ENCODE measurements at regions of chr5 and their contacts with region 1.

Region 1: DNA sequence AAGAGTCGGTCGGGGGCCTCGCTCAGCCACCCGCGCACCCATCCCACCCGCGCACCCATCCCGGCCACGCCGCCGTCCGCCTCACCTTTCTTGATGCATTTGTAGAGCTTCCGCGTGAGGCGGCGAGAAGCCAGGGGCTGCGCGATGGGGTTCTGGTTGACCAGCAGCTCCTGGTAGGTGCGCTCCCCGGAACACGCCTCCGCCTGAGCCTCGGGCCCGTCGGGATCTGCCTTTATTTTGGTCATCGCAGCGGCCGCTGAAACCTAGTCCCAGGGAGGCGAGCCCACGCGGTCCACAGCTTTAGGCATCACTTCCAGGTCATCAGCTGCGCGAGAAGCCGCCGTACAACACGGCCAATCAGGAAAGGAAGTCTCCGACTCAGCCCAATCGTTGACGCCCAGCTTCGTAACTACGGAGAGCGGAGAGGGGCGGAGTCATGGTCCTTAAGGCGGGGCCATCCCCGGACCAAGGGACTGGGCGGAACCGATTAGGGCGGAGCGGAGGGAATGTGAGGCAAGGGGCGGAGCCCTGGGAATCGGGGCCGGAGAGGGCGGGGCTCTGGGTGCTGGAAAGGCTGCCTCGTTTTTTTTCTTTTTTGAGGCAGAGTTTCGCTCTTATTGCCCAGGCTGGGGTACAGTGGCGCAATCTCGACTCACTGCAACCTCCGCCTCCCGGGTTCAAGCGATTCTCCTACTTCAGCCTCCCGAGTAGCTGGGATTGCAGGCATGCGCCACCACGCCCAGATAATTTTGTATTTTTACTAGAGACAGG is at the start of gene NHP2:
- DNase-seq: peak; percentile 98

Region 2: GRCh38 chr5:178075840-178076548 is 77.8 kb before region 1 on chr5:
- in situ Hi-C with region 1: loop called (anchors 10 kb)
- DNase-seq: peak; percentile 84

Region 3: DNA sequence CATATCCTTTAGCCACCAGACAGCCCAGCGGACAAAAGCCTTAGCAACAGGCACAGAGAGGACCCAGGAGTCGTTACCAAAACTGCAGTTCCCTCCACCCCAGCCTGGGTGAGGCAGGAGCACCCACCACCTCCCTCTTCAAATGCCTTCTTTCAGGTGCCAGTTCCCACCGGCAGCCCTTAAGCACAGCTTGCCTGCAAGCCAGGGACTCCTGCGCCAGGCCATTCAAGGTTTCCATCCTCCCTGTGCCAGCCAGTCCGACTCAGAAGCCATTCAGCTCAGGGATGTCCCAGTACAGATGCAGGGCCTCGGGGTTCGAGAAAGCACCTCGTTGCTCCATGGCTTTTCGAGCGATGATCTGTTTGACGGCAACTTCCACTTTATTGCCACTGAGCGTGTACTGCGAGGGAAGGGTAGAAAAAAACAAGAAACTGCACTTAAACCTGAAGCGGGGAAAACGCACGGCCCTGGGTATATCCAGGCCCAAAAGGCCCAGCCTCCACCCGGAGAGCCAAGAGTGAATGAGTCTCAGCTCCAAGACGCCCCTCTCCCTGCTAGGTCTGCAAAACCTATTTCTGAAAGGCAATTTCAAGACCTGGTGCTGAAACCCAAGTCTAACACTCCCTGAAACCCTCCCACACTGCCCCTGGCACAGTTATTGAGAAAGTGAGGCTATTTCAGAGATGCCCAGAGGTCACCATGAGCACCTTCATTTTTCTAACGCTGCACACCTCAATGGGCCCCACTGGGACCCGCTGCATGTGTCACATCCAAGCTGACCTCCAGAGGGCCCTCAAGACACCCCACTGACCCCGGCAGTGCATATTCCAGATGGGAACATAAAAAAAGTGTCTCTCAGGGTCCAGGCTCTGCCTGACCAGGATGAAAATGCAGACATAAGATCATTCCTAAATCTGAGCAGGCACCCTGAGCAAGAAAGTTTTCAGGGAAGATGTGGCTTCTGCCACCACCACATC is 613.5 kb after region 1 on chr5:
- in situ Hi-C with region 1: no loop called
- DNase-seq: no peak